ENCODE measurements at regions of chr2 and their contacts with region 1.

Region 1: GRCh38 chr2:127526149-127527000 is at the start of gene IWS1:
- DNase-seq: peak; percentile 95
- H3K4me3 Mint-ChIP-seq: peak within 1 kb of the TSS; percentile 86
- H3K27ac Mint-ChIP-seq: peak within 1 kb of the TSS; percentile 92
- H3K4me1 Mint-ChIP-seq: peaks cover 33% of the 10 kb centered on the region
- H3K27me3 Mint-ChIP-seq: peaks cover 7% of the 10 kb centered on the region
- total RNA-seq, gene IWS1: 40.8 to 43.3 TPM

Region 2: DNA sequence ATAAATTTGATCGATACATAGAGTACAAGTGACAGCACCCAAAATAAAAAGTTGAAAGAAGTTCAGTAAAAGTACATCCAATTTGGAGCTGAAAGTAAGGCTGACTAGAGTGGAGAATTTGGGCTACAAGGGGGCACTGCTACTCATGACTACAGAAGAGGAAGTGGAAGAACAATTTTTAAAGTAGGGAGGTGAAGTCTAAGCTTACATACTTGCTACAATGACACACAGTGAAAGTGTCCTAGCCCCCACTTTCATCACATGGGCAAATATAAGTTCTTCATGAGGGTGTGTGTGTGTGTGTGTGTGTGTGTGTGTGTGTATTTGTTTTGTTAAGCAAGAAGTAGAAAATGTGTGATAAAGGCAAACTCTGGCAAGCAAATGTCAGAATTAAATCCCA is 184.3 kb before region 1 on chr2:
- CTCF ChIA-PET with region 1: no interaction called
- POLR2A ChIA-PET with region 1: no interaction called
- DNase-seq: no peak
- H3K4me3 Mint-ChIP-seq: no peak overlapping the region
- H3K27ac Mint-ChIP-seq: no peak overlapping the region
- H3K4me1 Mint-ChIP-seq: no peaks in the 10 kb centered on the region
- H3K27me3 Mint-ChIP-seq: no peaks in the 10 kb centered on the region

Region 3: GRCh38 chr2:127515383-127515915 is 10.9 kb before region 1 on chr2:
- CTCF ChIA-PET with region 1: interaction called, 3 read pairs
- POLR2A ChIA-PET with region 1: interaction called, 12 read pairs
- DNase-seq: no peak
- H3K4me3 Mint-ChIP-seq: no peak overlapping the region
- H3K27ac Mint-ChIP-seq: no peak overlapping the region
- H3K4me1 Mint-ChIP-seq: peaks cover 48% of the 10 kb centered on the region
- H3K27me3 Mint-ChIP-seq: no peaks in the 10 kb centered on the region

Region 4: GRCh38 chr2:127576433-127577207 is 50.2 kb after region 1 on chr2:
- CTCF ChIA-PET with region 1: no interaction called
- POLR2A ChIA-PET with region 1: no interaction called
- DNase-seq: peak; percentile 11
- H3K4me3 Mint-ChIP-seq: no peak overlapping the region
- H3K27ac Mint-ChIP-seq: no peak overlapping the region
- H3K4me1 Mint-ChIP-seq: peaks cover 3% of the 10 kb centered on the region
- H3K27me3 Mint-ChIP-seq: peaks cover 38% of the 10 kb centered on the region

Region 5: DNA sequence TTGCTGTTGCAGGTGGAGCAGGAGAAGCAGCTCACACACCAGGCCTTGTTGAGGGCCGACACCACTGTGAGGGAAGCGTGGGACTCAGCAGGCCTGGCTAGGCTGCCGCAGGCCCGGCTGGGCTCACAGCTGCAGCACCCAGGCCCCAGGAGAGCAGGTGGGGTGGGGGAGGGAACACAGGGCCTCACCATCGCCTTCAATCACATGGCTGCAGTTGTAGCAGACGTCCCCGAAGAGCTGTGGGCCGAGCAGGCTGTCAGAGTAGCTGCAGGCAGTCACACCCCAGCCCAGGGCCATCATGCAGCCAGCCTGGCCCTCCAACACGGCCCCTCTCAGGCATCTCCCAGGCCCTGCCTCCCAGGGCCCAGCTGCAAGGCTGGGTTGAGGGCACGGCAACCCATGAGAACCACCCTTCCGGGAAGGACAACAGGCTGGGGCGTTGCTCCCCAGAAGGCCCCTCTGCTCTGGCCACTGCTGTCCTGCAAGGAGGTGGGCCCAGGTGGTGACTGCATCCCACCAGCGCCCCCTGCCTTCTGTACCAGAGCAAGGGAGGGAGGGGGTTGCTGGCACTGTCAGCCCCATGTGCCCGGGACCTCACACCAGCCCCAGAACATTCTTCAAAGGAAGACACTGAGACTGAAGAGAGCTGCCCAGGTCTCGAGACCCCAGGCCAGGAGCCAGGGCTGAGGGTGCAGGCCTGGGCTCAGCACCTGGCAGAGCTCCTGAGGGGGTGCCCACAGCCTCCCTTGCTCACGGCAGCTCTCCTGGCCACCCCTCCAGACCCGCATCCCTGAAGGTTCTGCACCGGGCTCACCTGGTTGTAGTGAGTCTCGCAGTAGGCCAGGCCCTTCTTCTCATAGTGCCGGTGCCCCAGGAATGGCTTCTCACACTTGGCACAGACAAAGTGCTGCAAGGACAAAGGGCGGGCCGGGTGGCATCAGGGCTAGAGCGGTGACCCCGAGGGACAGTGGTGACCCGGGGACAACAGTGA is 114.0 kb after region 1 on chr2:
- CTCF ChIA-PET with region 1: no interaction called
- POLR2A ChIA-PET with region 1: interaction called, 11 read pairs
- DNase-seq: peak; percentile 42
- H3K4me3 Mint-ChIP-seq: peak overlapping the region; percentile 54
- H3K27ac Mint-ChIP-seq: peak overlapping the region; percentile 63
- H3K4me1 Mint-ChIP-seq: peaks cover 42% of the 10 kb centered on the region
- H3K27me3 Mint-ChIP-seq: no peaks in the 10 kb centered on the region

Measured in activated CD4-positive, alpha-beta memory T cell treated with anti-CD3 and anti-CD28 coated beads, Interleukin-2, amount 10 ng/mL, durations not matched to agents 7 days and 5 days (primary cell).